ENCODE measurements at regions of chr20 and their contacts with region 1.

Region 1: GRCh38 chr20:51306503-51307358 is 235.8 kb downstream of the NFATC2 start:
- DNase-seq: peak; percentile 70
- H3K4me3 Mint-ChIP-seq: no peak overlapping the region
- H3K27ac Mint-ChIP-seq: no peak overlapping the region
- H3K4me1 Mint-ChIP-seq: peaks cover 2% of the 10 kb centered on the region
- H3K27me3 Mint-ChIP-seq: peaks cover 22% of the 10 kb centered on the region

Region 2: GRCh38 chr20:50987592-50988210 is 319.0 kb before region 1 on chr20:
- CTCF ChIA-PET with region 1: interaction called, 29 read pairs
- POLR2A ChIA-PET with region 1: no interaction called
- DNase-seq: peak; percentile 81
- H3K4me3 Mint-ChIP-seq: no peak overlapping the region
- H3K27ac Mint-ChIP-seq: no peak overlapping the region
- H3K4me1 Mint-ChIP-seq: no peaks in the 10 kb centered on the region
- H3K27me3 Mint-ChIP-seq: peaks cover 27% of the 10 kb centered on the region

Measured in activated CD4-positive, alpha-beta T cell treated with anti-CD3 and anti-CD28 coated beads, Interleukin-2, amount 10 ng/mL, durations not matched to agents 7 days and 5 days (primary cell).